ENCODE measurements at regions of chr21 and their contacts with region 1.

Region 1: DNA sequence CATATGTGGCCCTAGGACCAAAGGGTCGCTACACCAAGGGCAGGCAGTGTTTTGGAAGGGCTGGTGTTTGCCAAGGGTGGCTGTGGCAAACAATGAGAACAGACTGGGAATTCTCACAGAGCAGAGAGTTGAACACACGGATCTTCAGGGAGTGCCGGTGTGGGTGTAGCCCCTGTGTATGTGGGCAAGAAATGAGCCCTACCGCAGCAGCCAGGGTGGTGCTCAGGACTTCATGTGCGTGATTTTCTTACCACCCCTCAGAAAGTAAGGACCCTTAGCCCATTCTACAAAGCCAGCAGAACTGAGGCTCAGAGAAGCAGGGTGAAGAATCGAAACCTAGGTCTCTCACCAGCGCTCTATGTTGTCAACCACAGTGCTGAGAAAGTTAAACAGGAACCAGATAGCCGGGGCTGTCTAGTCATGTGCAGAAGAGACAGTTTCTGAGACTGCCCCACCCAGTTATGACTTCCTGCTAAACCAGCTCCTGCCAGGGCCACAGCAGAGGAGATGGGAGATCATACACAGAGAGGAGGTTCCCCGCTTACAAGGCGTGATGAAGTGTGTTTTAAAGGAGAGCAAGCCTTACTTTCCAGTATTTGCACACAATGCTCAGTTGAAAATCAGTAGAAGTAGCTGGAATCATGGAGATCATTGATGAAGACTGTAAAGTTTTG is 21.9 kb upstream of the MORC3 start:
- DNase-seq: peak; percentile 70
- H3K4me3 Mint-ChIP-seq: peak overlapping the region; percentile 66
- H3K27ac Mint-ChIP-seq: peak overlapping the region; percentile 72
- H3K4me1 Mint-ChIP-seq: peaks cover 29% of the 10 kb centered on the region
- H3K27me3 Mint-ChIP-seq: peaks cover 6% of the 10 kb centered on the region

Region 2: GRCh38 chr21:35801393-35801792 is 496.7 kb before region 1 on chr21:
- intact Hi-C with region 1: no loop called
- DNase-seq: no peak
- H3K4me3 Mint-ChIP-seq: no peak overlapping the region
- H3K27ac Mint-ChIP-seq: no peak overlapping the region
- H3K4me1 Mint-ChIP-seq: no peaks in the 10 kb centered on the region
- H3K27me3 Mint-ChIP-seq: peaks cover 8% of the 10 kb centered on the region

Region 3: GRCh38 chr21:36310016-36310415 is 12.0 kb after region 1 on chr21:
- intact Hi-C with region 1: loop called (anchors 1 kb)
- DNase-seq: no peak
- H3K4me3 Mint-ChIP-seq: no peak overlapping the region
- H3K27ac Mint-ChIP-seq: peak overlapping the region; percentile 29
- H3K4me1 Mint-ChIP-seq: peaks cover 6% of the 10 kb centered on the region
- H3K27me3 Mint-ChIP-seq: peaks cover 6% of the 10 kb centered on the region